Right ventricle myocardium inferior (tissue), 1 donor: ENCODE measurements at regions of chr2 and their contacts with region 1.

Region 1: DNA sequence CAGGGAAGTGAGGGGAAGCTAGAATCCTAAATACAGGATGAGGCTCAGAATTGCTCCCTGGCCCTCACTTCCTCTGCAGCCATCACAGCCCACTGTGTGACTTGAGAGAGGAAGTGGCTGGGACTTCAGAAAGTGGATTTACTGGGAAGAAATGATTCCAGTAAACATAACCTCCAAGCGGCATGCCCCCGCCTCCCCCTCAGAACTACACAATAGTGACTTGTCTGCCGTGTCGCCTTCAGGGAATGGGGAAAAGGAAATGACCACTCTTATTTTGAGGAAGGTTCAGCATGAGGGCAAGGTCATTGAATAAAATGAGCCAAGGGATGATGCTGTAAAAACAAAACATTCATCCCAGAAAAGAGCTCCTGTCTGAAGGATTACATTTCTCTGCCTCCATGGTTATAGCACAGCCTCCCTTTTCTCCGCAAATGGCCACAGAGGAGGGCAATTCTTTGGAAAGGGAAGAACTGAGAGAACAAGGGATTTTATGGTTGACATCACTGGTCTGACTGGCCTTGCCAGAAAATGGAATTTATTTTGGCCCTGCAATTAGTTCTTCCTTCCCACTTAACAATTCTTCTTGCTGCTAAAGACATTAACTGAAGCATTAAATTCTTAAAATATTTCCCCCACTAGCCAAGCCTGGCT is 78.9 kb upstream of the DAPL1 start:
- DNase-seq: no peak
- ATAC-seq: peak; percentile 53

Region 2: GRCh38 chr2:158667586-158667985 is 48.7 kb before region 1 on chr2:
- intact Hi-C with region 1: loop called (anchors 5 kb)
- DNase-seq: no peak
- ATAC-seq: peak; percentile 54

Region 3: DNA sequence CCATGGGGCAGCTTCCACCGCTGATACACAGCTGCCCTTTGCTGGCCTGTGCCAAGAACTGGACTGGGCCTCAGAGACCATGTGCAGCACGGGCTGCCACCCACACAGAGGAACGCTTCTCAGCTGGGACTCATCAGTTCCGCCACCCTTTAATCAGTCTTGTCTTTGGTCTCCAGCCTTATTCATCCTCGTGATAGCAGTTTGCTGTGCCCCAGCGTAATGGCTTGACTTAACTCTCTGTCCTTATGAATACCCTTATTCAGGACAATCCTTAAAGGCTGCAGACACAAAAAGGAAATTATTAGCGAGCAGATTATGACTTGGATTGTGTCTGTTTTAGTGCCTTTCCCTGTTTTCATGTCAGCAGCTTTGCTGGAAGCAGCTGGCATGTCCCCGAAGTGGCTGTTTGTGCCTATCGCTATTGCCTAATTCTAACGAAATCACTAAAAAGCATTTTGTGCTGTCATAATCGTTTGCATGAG is 30.0 kb before region 1 on chr2:
- intact Hi-C with region 1: no loop called
- DNase-seq: no peak
- ATAC-seq: peak; percentile 77